ENCODE measurements at regions of chr3 and their contacts with region 1.

Region 1: DNA sequence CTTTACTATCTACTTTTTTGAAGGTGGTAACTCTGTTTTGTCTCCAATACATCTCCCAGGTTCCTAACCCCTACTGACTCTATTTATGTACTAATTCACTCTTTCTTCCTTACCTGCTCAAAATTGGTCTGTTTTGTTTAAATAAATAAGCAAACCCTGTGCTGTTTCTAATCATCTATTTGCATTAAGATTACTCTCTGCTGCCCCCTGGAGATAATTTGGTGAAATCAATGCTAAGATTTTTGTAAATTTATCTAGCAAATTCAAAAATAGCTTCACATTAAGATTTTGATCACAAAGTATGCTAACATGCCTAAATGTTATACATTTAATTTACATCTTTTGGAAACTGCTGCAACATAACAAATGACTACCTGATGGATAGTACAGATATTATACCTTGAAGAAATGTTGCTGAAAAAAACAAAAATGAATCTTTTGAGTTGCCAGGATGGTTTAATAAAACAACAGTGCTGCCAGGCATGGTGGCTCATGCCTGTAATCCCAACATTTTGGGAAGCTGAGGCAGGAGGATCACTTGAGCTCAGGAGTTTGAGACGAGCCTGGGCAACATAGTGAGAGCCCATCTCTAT is 4.4 kb upstream of the CD200R1 start:
- DNase-seq: peak; percentile 48
- H3K4me3 ChIP-seq: no peak overlapping the region
- H3K27ac ChIP-seq: no peak overlapping the region
- H3K4me1 ChIP-seq: no peaks in the 10 kb centered on the region
- H3K27me3 ChIP-seq: peaks cover 3 to 13% of the 10 kb centered on the region in 2 experiments
- CTCF ChIP-seq: peak; percentile 34 to 36
- POLR2A ChIP-seq: no peak

Region 2: DNA sequence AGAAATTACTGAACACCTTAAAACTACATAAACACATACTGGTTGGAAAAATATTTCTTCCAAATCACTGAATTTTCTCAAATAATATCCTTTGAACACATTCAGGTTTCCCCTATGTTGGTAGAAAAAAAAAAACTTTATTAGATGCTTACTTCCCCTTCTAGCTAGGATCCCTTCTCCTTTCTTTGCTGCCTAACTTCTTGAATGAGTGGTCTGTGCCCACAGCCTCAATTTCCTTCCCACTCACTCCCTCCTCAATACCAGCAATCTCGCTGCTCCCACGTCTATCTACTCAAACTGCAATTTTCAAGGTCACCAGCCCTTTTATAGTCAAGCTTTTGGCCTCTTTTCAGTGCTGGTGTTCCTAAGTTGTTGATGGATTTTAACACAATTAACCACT is 12.7 kb before region 1 on chr3:
- CTCF ChIA-PET with region 1: interaction called, 31 read pairs
- POLR2A ChIA-PET with region 1: no interaction called
- dilution Hi-C with region 1: no loop called
- intact Hi-C with region 1: no loop called
- DNase-seq: no peak
- H3K4me3 ChIP-seq: no peak overlapping the region
- H3K27ac ChIP-seq: no peak overlapping the region
- H3K4me1 ChIP-seq: no peaks in the 10 kb centered on the region
- H3K27me3 ChIP-seq: peaks cover 11 to 14% of the 10 kb centered on the region in 2 experiments
- CTCF ChIP-seq: no peak
- POLR2A ChIP-seq: no peak

Region 3: DNA sequence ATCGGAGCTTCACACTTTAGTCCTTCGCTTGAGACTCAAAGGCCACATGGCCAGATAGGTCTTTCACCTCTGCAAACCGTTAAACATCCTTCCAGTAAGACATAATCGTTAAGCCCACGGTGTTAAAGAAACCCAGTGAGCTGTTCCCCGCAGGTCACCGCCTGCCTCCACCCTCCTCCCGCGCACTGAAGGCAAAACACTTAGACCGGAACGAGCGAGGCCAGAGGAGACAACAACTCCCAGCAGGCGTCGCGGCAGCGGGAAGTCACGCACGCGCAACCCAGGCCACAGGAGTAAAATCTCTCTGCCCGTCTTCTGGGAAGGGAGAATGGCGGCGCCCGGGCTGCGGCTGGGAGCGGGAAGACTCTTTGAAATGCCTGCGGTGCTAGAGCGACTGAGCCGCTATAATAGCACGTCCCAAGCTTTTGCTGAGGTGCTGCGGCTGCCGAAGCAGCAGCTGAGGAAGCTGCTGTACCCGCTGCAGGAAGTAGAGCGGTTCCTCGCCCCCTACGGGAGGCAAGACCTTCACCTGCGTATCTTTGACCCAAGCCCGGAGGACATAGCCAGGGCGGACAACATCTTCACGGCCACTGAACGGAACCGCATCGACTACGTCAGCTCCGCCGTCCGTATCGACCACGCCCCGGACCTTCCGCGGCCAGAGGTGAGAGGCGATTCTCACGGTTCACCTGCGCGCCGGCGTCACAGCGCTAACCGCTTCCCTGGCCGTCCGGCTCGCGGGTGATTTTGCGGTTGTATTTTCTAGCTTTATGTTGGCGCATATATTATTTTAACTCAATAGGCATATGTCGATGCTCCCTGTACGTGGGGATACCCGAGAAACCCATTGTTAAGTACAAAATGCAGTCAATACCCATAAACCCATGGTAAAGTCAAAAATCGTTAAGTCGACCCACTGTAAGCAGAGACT is 11.6 kb after region 1 on chr3 and contains the start of gene GTPBP8:
- CTCF ChIA-PET with region 1: interaction called, 25 read pairs
- POLR2A ChIA-PET with region 1: no interaction called
- dilution Hi-C with region 1: no loop called
- intact Hi-C with region 1: no loop called
- DNase-seq: peak; percentile 87
- H3K4me3 ChIP-seq: peak within 1 kb of the TSS; percentile 62 to 92 (median 89)
- H3K27ac ChIP-seq: peak within 1 kb of the TSS; percentile 52
- H3K4me1 ChIP-seq: peaks cover 14% of the 10 kb centered on the region
- H3K27me3 ChIP-seq: no peaks in the 10 kb centered on the region
- CTCF ChIP-seq: peak in 1 of 2 donors; percentile 15
- POLR2A ChIP-seq: peak; percentile 82
- total RNA-seq, gene GTPBP8: 13.7 and 15.4 TPM in 2 replicates

Region 4: GRCh38 chr3:113002679-113003078 is 23.3 kb after region 1 on chr3:
- CTCF ChIA-PET with region 1: interaction called, 18 read pairs
- POLR2A ChIA-PET with region 1: no interaction called
- dilution Hi-C with region 1: no loop called
- intact Hi-C with region 1: no loop called
- DNase-seq: no peak
- H3K4me3 ChIP-seq: no peak overlapping the region
- H3K27ac ChIP-seq: no peak overlapping the region
- H3K4me1 ChIP-seq: peaks cover 7% of the 10 kb centered on the region
- H3K27me3 ChIP-seq: no peaks in the 10 kb centered on the region
- CTCF ChIP-seq: no peak
- POLR2A ChIP-seq: no peak

Measured in endothelial cell of umbilical vein (primary cell).